CD14-positive monocyte (primary cell): ENCODE measurements at regions of chr15 and their contacts with region 1.

Region 1: DNA sequence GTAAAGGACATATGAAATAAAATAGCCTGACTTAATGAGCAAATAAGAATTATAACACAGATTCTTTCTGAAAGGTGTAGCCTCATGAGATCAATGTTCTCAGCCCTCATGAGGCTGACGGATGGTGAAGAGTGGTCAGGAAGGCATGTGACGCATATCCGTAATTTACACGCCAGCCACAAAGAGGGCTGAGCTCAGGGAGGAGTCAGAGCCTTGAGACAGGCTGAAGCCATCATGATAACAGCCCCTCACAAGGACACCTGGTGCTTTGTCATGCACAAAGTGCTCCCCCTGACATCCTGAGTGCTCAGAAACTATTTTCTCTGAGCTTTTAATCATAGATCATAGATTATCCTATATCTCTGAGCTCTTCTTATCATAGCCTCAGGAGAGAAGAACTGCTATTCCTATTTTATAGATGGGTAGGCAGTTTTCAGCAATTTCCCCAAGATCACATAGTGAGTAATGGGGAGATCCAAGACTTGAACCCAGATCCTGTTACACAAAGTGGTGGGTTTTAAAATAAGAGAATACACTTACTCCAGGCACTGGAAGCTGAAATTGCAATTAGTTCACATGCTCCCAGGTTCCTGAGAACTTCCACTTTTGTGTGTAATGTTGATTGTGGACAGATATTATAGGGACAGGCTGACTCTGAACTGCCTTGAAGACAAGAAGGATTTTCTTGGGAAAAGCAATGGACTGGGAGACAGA is 267.1 kb downstream of the RPLP1 start:
- DNase-seq: peak; percentile 92 to 96 (median 93)
- H3K4me3 ChIP-seq: no peak overlapping the region
- H3K4me3 Mint-ChIP-seq: no peak overlapping the region
- H3K27ac ChIP-seq: peak overlapping the region; percentile 95
- H3K27ac Mint-ChIP-seq: peak overlapping the region; percentile 99 to 100 (median 100)
- H3K4me1 ChIP-seq: peaks cover 87 to 97% of the 10 kb centered on the region in 2 donors
- H3K4me1 Mint-ChIP-seq: peaks cover 93% of the 10 kb centered on the region
- H3K27me3 ChIP-seq: no peaks in the 10 kb centered on the region
- H3K27me3 Mint-ChIP-seq: peaks cover 0 to 4% (median 2%) of the 10 kb centered on the region in 3 donors
- CTCF ChIP-seq: no peak

Region 2: GRCh38 chr15:69576035-69576526 is 143.6 kb before region 1 on chr15:
- intact Hi-C with region 1: loop called in 1 of 2 experiments (anchors 5 kb)
- DNase-seq: peak; percentile 69 to 77 (median 71)
- H3K4me3 ChIP-seq: no peak overlapping the region
- H3K4me3 Mint-ChIP-seq: peak overlapping the region in 1 of 2 donors; percentile 35
- H3K27ac ChIP-seq: no peak overlapping the region
- H3K27ac Mint-ChIP-seq: peak overlapping the region; percentile 55 to 78 (median 63)
- H3K4me1 ChIP-seq: peaks cover 24 to 29% of the 10 kb centered on the region in 2 donors
- H3K4me1 Mint-ChIP-seq: peaks cover 45% of the 10 kb centered on the region
- H3K27me3 ChIP-seq: no peaks in the 10 kb centered on the region
- H3K27me3 Mint-ChIP-seq: peaks cover 9 to 11% (median 11%) of the 10 kb centered on the region in 3 donors
- CTCF ChIP-seq: peak; percentile 82

Region 3: DNA sequence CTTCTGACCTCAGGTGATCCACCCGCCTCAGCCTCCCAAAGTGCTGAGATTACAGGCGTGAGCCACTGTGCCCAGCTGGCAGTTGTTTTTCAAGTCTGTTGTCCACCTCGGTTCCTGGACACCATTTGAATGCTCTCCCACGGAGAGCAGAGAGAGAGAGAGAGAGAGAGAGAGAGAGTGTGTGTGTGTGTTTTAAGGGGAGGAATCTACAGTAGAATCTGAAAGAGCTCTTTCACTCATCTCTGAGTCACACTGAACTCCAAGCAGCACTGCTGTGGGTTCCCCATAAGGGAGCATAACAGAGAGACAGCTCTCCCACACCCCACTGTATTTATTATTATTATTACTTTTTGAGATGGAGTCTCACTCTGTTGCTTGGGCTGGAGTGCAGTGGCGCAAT is 110.5 kb before region 1 on chr15:
- intact Hi-C with region 1: loop called in 1 of 2 experiments (anchors 5 kb)
- DNase-seq: peak; percentile 72 to 84 (median 78)
- H3K4me3 ChIP-seq: no peak overlapping the region
- H3K4me3 Mint-ChIP-seq: peak overlapping the region in 1 of 2 donors; percentile 7
- H3K27ac ChIP-seq: peak overlapping the region; percentile 54 to 93
- H3K27ac Mint-ChIP-seq: peak overlapping the region; percentile 97 to 99 (median 98)
- H3K4me1 ChIP-seq: peaks cover 79 to 90% of the 10 kb centered on the region in 2 donors
- H3K4me1 Mint-ChIP-seq: peaks cover 77% of the 10 kb centered on the region
- H3K27me3 ChIP-seq: no peaks in the 10 kb centered on the region
- H3K27me3 Mint-ChIP-seq: peaks cover 0 to 7% (median 5%) of the 10 kb centered on the region in 3 donors
- CTCF ChIP-seq: no peak

Region 4: GRCh38 chr15:69666411-69666882 is 53.2 kb before region 1 on chr15:
- intact Hi-C with region 1: loop called (anchors 2 to 5 kb)
- DNase-seq: peak; percentile 86 to 91 (median 89)
- H3K4me3 ChIP-seq: peak overlapping the region in 1 of 3 experiments; percentile 56
- H3K4me3 Mint-ChIP-seq: peak overlapping the region; percentile 59 to 86
- H3K27ac ChIP-seq: peak overlapping the region; percentile 97 to 99
- H3K27ac Mint-ChIP-seq: peak overlapping the region; percentile 97 to 100 (median 99)
- H3K4me1 ChIP-seq: peaks cover 65 to 71% of the 10 kb centered on the region in 2 donors
- H3K4me1 Mint-ChIP-seq: peaks cover 65% of the 10 kb centered on the region
- H3K27me3 ChIP-seq: no peaks in the 10 kb centered on the region
- H3K27me3 Mint-ChIP-seq: peaks cover 2 to 4% (median 4%) of the 10 kb centered on the region in 3 donors
- CTCF ChIP-seq: no peak

Region 5: GRCh38 chr15:69834761-69835160 is 115.1 kb after region 1 on chr15:
- intact Hi-C with region 1: no loop called
- DNase-seq: no peak
- H3K4me3 ChIP-seq: no peak overlapping the region
- H3K4me3 Mint-ChIP-seq: no peak overlapping the region
- H3K27ac ChIP-seq: no peak overlapping the region
- H3K27ac Mint-ChIP-seq: no peak overlapping the region
- H3K4me1 ChIP-seq: no peaks in the 10 kb centered on the region
- H3K4me1 Mint-ChIP-seq: peaks cover 7% of the 10 kb centered on the region
- H3K27me3 ChIP-seq: no peaks in the 10 kb centered on the region
- H3K27me3 Mint-ChIP-seq: peaks cover 7 to 10% (median 9%) of the 10 kb centered on the region in 3 donors
- CTCF ChIP-seq: no peak

Region 6: GRCh38 chr15:70504299-70504951 is 784.7 kb after region 1 on chr15:
- intact Hi-C with region 1: loop called in 1 of 2 experiments (anchors 5 kb)
- DNase-seq: peak; percentile 88 to 96 (median 93)
- H3K4me3 ChIP-seq: peak overlapping the region in 1 of 3 experiments; percentile 47
- H3K4me3 Mint-ChIP-seq: peak overlapping the region; percentile 45 to 74
- H3K27ac ChIP-seq: peak overlapping the region; percentile 50 to 73
- H3K27ac Mint-ChIP-seq: peak overlapping the region; percentile 87 to 96 (median 93)
- H3K4me1 ChIP-seq: peaks cover 64 to 67% of the 10 kb centered on the region in 2 donors
- H3K4me1 Mint-ChIP-seq: peaks cover 73% of the 10 kb centered on the region
- H3K27me3 ChIP-seq: peaks cover 0 to 2% of the 10 kb centered on the region in 2 donors
- H3K27me3 Mint-ChIP-seq: peaks cover 5 to 19% (median 15%) of the 10 kb centered on the region in 3 donors
- CTCF ChIP-seq: no peak